H1 (cell line): ENCODE measurements at regions of chr3 and their contacts with region 1.

Region 1: DNA sequence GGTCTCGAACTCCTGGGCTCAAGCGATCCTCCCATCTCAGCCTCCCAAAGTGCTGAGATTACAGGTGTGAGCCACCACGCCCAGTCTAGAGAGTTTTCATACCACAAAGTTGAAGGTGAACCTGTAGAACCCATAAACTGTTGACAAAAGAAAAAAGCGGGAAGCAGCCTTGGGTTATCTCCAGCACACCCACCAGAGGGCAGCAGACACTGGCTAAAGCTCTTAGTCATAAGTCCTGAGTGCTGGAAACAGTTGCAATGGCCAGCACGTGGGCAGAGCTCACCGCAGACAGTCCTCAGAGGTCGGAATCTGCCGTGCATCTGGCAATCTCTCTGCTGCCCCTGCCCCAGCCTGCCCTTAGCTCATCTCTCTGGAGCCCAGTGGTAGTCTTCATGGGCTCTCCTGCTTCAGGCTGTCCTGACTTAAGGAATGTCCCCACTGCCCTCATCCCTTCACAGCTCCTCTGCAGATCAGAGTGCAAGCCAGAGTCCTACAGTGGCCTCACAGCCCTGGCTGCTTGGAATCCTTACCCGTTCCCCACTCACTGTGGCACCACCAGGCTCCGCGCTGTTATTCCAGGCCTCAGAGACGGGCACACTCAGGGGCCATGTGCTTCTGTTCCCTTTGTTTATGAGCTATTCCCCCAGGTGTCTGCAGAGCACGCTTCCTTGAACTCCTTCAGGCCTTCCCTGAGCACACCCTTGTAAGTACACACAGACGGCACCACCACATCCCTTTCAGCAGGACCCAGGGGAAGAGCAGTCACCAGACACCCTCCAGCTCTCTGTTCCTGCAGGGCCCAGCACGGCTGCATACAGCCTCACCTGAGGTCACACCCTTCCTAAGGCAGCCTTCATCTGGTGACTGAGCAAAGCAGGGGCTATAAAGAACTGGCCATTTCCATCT is 8.8 kb upstream of the ELP6 start:
- DNase-seq: peak; percentile 81 to 89
- H3K4me3 ChIP-seq: no peak overlapping the region
- H3K27ac ChIP-seq: no peak overlapping the region
- H3K4me1 ChIP-seq: peaks cover 0 to 11% (median 2%) of the 10 kb centered on the region in 4 experiments; a peak in 4 of 7 replicates
- H3K27me3 ChIP-seq: peaks cover 3 to 14% (median 13%) of the 10 kb centered on the region in 4 experiments
- CTCF ChIP-seq: peak; percentile 71 to 93 (median 88)
- EP300 ChIP-seq: no peak
- POLR2A ChIP-seq: no peak
- RAD21 ChIP-seq: peak; percentile 98 to 99

Region 2: GRCh38 chr3:47359323-47359722 is 163.0 kb before region 1 on chr3:
- CTCF ChIA-PET with region 1: no interaction called
- POLR2A ChIA-PET with region 1: no interaction called
- DNase-seq: no peak
- H3K4me3 ChIP-seq: no peak overlapping the region
- H3K27ac ChIP-seq: no peak overlapping the region
- H3K4me1 ChIP-seq: no peaks in the 10 kb centered on the region; a peak in 1 of 7 replicates
- H3K27me3 ChIP-seq: no peaks in the 10 kb centered on the region
- CTCF ChIP-seq: no peak
- EP300 ChIP-seq: no peak
- POLR2A ChIP-seq: no peak
- RAD21 ChIP-seq: no peak

Region 3: GRCh38 chr3:47553407-47553806 is 31.1 kb after region 1 on chr3:
- CTCF ChIA-PET with region 1: interaction called, 31 read pairs
- POLR2A ChIA-PET with region 1: no interaction called
- DNase-seq: no peak
- H3K4me3 ChIP-seq: no peak overlapping the region
- H3K27ac ChIP-seq: no peak overlapping the region
- H3K4me1 ChIP-seq: peaks cover 0 to 3% (median 1%) of the 10 kb centered on the region in 4 experiments; a peak in 2 of 7 replicates
- H3K27me3 ChIP-seq: no peaks in the 10 kb centered on the region
- CTCF ChIP-seq: no peak
- EP300 ChIP-seq: no peak
- POLR2A ChIP-seq: no peak
- RAD21 ChIP-seq: no peak

Region 4: GRCh38 chr3:47571391-47572175 is 49.2 kb after region 1 on chr3:
- CTCF ChIA-PET with region 1: interaction called, 34 read pairs
- POLR2A ChIA-PET with region 1: no interaction called
- DNase-seq: no peak
- H3K4me3 ChIP-seq: no peak overlapping the region
- H3K27ac ChIP-seq: no peak overlapping the region
- H3K4me1 ChIP-seq: no peaks in the 10 kb centered on the region; a peak in 2 of 7 replicates
- H3K27me3 ChIP-seq: peaks cover 0 to under 1% (median 0%) of the 10 kb centered on the region in 4 experiments; a peak in 2 of 7 replicates
- CTCF ChIP-seq: no peak
- EP300 ChIP-seq: no peak
- POLR2A ChIP-seq: no peak
- RAD21 ChIP-seq: no peak

Region 5: GRCh38 chr3:47594792-47595191 is 72.5 kb after region 1 on chr3:
- CTCF ChIA-PET with region 1: interaction called, 13 read pairs
- POLR2A ChIA-PET with region 1: interaction called, 4 read pairs
- DNase-seq: peak in 1 of 2 experiments; percentile 63
- H3K4me3 ChIP-seq: no peak overlapping the region
- H3K27ac ChIP-seq: no peak overlapping the region
- H3K4me1 ChIP-seq: peaks cover 0 to 3% (median under 1%) of the 10 kb centered on the region in 4 experiments; a peak in 2 of 7 replicates
- H3K27me3 ChIP-seq: no peaks in the 10 kb centered on the region
- CTCF ChIP-seq: no peak
- EP300 ChIP-seq: no peak
- POLR2A ChIP-seq: no peak
- RAD21 ChIP-seq: no peak

Region 6: GRCh38 chr3:47612178-47612577 is 89.8 kb after region 1 on chr3:
- CTCF ChIA-PET with region 1: interaction called, 15 read pairs
- POLR2A ChIA-PET with region 1: interaction called, 3 read pairs
- DNase-seq: no peak
- H3K4me3 ChIP-seq: no peak overlapping the region
- H3K27ac ChIP-seq: no peak overlapping the region
- H3K4me1 ChIP-seq: no peaks in the 10 kb centered on the region
- H3K27me3 ChIP-seq: no peaks in the 10 kb centered on the region
- CTCF ChIP-seq: no peak
- EP300 ChIP-seq: no peak
- POLR2A ChIP-seq: no peak
- RAD21 ChIP-seq: no peak

Region 7: GRCh38 chr3:47824541-47825473 is 302.5 kb after region 1 on chr3:
- CTCF ChIA-PET with region 1: interaction called, 15 read pairs
- POLR2A ChIA-PET with region 1: interaction called, 9 read pairs
- DNase-seq: peak in 1 of 2 experiments; percentile 86
- H3K4me3 ChIP-seq: peak overlapping the region; percentile 80 to 99 (median 86)
- H3K27ac ChIP-seq: peak overlapping the region; percentile 79
- H3K4me1 ChIP-seq: peaks cover 3 to 6% (median 4%) of the 10 kb centered on the region in 4 experiments; a peak in 5 of 7 replicates
- H3K27me3 ChIP-seq: no peaks in the 10 kb centered on the region
- CTCF ChIP-seq: peak; percentile 76 to 91 (median 90)
- EP300 ChIP-seq: no peak; a peak in 1 of 3 replicates
- POLR2A ChIP-seq: peak; percentile 84 to 93
- RAD21 ChIP-seq: peak; percentile 23 to 53; a peak in 3 of 4 replicates